Endothelial cell of umbilical vein (primary cell): ENCODE measurements at regions of chr1 and their contacts with region 1.

Region 1: DNA sequence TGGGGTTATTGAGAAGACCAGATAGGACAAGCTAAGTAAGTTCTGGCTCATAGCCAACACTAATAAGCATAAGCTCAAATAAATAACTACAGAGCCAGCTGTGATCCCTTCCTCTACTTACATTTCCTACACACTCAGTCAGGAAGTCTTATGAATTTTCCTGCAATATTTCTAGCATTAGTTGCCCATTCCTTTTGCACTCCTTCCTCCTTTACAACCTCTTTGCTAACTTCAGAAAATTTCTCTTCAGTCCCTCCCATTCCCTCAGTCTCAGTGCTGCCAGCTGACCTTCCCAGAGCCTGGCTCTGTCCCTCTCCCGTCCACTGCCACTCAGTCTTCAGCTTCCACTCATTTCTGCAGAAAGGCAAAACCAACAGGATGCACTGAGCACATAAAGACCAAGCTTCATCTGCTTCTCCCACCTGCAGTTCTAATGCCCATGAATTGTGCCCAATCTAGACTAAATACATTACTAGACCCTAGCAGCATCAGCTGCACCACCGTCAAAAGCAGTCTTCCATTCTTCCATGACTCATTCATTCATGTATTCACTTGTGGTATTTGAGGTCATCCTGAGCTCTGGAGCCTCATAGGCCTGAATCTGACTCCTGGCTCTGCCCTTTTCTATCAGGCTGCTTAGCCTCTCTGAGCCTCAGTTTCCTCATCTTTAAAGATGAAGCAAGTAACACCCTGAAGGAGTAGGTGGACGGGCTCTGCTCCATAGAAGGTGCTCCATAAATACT is 54.6 kb upstream of the SIPA1L2 start:
- DNase-seq: peak; percentile 74
- H3K4me3 ChIP-seq: no peak overlapping the region
- H3K27ac ChIP-seq: peak overlapping the region; percentile 62
- H3K4me1 ChIP-seq: peaks cover 40% of the 10 kb centered on the region
- H3K27me3 ChIP-seq: no peaks in the 10 kb centered on the region
- CTCF ChIP-seq: no peak
- POLR2A ChIP-seq: peak; percentile 57

Region 2: DNA sequence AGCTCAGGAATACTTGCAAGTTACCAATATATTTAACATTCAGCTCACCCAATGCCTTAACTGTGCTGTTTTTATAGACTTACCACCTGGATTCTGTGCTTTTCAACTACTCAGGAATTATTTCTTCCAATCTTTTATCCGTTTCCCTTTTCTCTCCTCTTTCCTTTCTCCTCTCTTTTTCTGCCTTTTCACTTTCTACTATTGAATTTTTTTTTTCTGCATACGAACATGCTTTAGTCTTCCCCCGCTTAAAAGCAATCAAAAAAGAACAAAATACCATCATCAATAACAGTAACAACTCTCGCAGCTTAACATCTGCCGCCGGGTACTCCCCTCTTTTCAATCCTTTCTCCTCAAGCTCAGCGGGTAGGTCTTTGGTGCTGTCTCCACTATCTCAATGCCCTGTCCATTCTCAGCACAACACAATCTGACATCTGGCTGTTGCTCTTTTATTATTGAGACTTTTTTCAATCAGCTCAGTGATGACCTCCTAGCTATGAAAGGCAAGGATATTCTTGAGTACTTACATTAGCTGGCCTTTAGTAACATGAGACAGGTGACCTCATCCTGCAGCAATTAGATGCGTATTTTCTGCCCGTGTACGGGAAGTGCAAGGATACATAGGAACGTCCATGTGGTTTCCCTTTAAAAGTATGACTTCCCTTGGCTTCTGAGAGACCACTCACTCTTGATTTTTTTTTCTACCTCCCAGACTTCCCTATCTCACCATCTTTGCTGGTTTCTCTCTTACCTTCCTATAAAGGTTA is 14.4 kb before region 1 on chr1:
- CTCF ChIA-PET with region 1: interaction called, 10 read pairs
- POLR2A ChIA-PET with region 1: no interaction called
- dilution Hi-C with region 1: no loop called
- intact Hi-C with region 1: loop called (anchors 1 kb)
- DNase-seq: peak; percentile 26
- H3K4me3 ChIP-seq: no peak overlapping the region
- H3K27ac ChIP-seq: no peak overlapping the region
- H3K4me1 ChIP-seq: peaks cover 9% of the 10 kb centered on the region
- H3K27me3 ChIP-seq: no peaks in the 10 kb centered on the region
- CTCF ChIP-seq: no peak
- POLR2A ChIP-seq: no peak

Region 3: DNA sequence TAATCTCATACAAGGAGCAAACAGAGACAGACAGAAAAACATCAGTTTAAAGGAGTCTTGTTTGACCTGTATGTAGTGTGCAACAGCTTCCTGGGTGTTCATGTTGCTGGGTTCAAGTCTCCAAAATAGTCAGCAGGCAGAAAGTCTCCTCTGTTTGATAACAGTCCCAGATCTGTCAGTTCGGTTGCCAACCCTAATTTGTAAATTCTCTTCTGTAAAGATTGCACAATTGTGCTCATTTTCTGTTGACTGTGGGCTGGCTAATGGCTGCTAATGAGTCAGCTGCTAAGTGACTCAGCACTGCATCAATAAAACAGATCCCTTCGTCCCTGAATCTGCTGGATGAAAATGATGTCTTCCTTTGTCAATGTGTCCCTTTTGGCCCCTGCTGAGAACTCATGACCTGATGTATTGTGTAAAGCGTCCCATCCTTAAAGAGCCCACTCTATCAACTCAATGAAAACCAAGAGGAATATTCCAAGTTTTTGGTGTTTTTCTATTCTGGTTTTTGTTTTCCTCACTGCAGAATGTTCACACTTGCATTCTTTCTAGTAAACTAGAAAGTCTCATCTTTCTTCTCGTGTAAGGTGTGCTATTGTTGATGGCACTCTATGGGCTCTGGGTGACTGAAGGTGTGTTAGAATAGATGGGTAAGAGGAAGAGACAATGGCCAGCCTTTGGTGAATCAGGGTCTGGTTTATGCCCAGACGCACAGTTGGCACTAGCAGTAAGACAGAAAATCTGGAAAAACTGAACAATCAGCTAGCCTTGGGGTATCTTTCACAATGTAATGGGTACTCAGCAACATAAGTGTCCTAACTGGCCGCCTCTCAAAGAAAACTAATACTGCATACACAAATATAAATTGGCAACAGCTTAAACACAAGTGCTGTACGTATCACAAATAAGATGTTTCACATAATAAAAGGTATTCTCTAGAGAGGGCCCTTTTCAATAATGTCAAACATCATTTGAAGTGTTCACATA is 20.5 kb after region 1 on chr1:
- CTCF ChIA-PET with region 1: interaction called, 4 read pairs
- POLR2A ChIA-PET with region 1: no interaction called
- dilution Hi-C with region 1: no loop called
- intact Hi-C with region 1: loop called (anchors 1 kb)
- DNase-seq: peak; percentile 75
- H3K4me3 ChIP-seq: no peak overlapping the region
- H3K27ac ChIP-seq: peak overlapping the region; percentile 51
- H3K4me1 ChIP-seq: peaks cover 21% of the 10 kb centered on the region
- H3K27me3 ChIP-seq: no peaks in the 10 kb centered on the region
- CTCF ChIP-seq: no peak
- POLR2A ChIP-seq: no peak

Region 4: GRCh38 chr1:232805269-232806185 is 121.0 kb after region 1 on chr1 and contains the start of gene MAP10:
- CTCF ChIA-PET with region 1: interaction called, 3 read pairs
- POLR2A ChIA-PET with region 1: no interaction called
- dilution Hi-C with region 1: no loop called
- intact Hi-C with region 1: loop called (anchors 5 kb)
- DNase-seq: peak; percentile 77
- H3K4me3 ChIP-seq: peak within 1 kb of the TSS; percentile 62 to 80 (median 72)
- H3K27ac ChIP-seq: peak within 1 kb of the TSS; percentile 32
- H3K4me1 ChIP-seq: peaks cover 6% of the 10 kb centered on the region
- H3K27me3 ChIP-seq: no peaks in the 10 kb centered on the region
- CTCF ChIP-seq: no peak
- POLR2A ChIP-seq: peak; percentile 51
- total RNA-seq, gene MAP10: 1.9 and 2.0 TPM in 2 replicates

Region 5: GRCh38 chr1:232974971-232975370 is 290.4 kb after region 1 on chr1:
- CTCF ChIA-PET with region 1: no interaction called
- POLR2A ChIA-PET with region 1: no interaction called
- dilution Hi-C with region 1: no loop called
- intact Hi-C with region 1: loop called (anchors 1 kb)
- DNase-seq: peak; percentile 65
- H3K4me3 ChIP-seq: no peak overlapping the region
- H3K27ac ChIP-seq: no peak overlapping the region
- H3K4me1 ChIP-seq: peaks cover 2% of the 10 kb centered on the region
- H3K27me3 ChIP-seq: no peaks in the 10 kb centered on the region
- CTCF ChIP-seq: no peak
- POLR2A ChIP-seq: no peak